Sigmoid colon (tissue), 7 donors: ENCODE measurements at regions of chr2 and their contacts with region 1.

Region 1: DNA sequence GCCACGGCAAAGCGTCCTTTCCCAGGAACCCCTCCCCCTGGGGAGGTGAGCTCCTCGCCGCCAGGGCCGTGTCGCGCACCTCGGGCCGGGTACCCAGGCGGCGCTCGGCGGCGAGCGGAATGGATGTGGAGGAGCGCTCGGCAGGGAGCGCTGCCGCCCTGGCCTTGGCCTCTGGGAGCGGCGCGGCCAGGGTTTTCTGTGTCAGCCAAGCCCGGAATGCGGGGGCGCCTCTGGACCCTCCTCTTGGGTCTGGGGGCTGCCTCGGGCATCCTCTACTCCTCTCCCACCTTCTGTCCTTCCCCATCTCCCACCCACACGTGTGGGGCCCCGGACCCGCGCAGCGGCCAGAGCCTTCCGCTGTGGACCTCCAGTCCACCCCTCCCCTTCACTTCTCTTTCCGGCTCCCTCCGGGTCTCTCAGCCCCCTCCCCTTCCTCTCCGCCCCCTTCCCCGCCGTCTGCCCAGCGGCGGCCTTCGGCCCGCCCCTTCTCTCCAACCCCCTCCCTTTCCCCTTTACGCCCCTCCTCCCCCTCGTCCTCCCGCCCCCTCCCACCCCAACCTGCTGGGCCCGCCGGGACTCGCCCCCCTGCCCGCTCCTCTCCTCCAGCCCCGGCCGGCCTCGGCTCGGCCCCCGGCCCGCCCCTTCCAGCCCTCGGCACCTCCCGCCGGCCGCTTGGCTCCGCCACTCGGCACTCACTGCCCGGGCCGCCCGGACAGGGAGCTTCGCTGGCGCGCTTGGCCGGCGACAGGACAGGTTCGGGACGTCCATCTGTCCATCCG is at the start of gene MERTK:
- DNase-seq: peak; percentile 95
- H3K4me3 ChIP-seq: peak within 1 kb of the TSS; percentile 70 to 80 (median 75)
- H3K27ac ChIP-seq: peak within 1 kb of the TSS; percentile 80 to 90 (median 88)
- H3K4me1 ChIP-seq: peaks cover 0 to 37% (median 23%) of the 10 kb centered on the region in 4 donors
- H3K27me3 ChIP-seq: no peaks in the 10 kb centered on the region
- CTCF ChIP-seq: peak; percentile 43 to 49 (median 46)
- EP300 ChIP-seq: no peak
- POLR2A ChIP-seq: peak in 1 of 2 donors; percentile 42
- total RNA-seq, gene MERTK: 14.4 to 31.6 (median 26.0) TPM

Region 2: DNA sequence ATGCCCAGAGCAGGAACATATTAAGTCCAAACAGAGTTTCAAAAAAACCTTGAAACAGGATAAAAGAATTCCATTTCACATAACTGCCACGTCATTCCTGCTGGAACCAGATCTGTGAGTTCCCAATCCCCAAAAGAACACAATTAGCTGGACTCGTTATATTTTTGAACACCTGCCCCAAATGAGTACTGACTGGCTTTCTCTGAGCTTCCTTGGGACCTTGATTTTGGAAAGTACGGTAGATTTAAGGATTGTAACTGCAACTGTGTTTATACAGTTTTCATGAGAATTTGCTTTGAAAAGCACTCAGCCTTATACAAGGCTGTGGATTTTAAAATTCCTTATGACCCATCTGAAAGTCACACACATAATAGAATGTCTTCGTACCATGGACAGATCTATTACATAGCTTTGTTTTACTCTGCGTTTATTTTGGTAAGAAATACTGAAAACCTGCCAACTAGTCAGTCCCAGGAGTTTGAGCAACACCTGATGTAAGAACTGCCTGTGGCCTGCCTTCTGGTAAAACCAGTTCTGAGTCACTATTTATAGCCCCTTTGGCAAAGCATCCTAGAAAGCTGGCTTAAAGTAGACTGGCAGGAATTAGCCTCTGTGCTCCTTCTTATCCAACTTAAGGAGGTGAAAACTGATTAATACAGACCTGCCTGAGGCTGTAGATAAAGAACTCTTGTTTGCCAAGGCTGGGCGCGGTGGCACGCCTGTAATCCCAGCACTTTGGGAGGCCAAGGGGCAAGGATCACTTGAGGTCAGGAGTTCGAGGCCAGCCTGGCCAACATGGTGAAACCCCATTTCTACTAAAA is 48.4 kb after region 1 on chr2:
- intact Hi-C with region 1: loop called (anchors 5 kb)
- DNase-seq: peak; percentile 76
- H3K4me3 ChIP-seq: no peak overlapping the region
- H3K27ac ChIP-seq: peak overlapping the region; percentile 65 to 83 (median 80)
- H3K4me1 ChIP-seq: peaks cover 0 to 35% (median 28%) of the 10 kb centered on the region in 4 donors
- H3K27me3 ChIP-seq: no peaks in the 10 kb centered on the region
- CTCF ChIP-seq: no peak
- EP300 ChIP-seq: peak in 2 of 4 donors; percentile 37 to 44
- POLR2A ChIP-seq: no peak

Region 3: GRCh38 chr2:112275306-112275886 is 377.3 kb after region 1 on chr2 and contains the start of gene ZC3H6:
- intact Hi-C with region 1: loop called (anchors 5 kb)
- DNase-seq: peak; percentile 99
- H3K4me3 ChIP-seq: peak within 1 kb of the TSS; percentile 68 to 97 (median 89)
- H3K27ac ChIP-seq: peak within 1 kb of the TSS; percentile 95 to 100 (median 99)
- H3K4me1 ChIP-seq: peaks cover 0 to 14% (median 6%) of the 10 kb centered on the region in 4 donors
- H3K27me3 ChIP-seq: no peaks in the 10 kb centered on the region
- CTCF ChIP-seq: peak in 1 of 4 experiments; percentile 36
- EP300 ChIP-seq: peak in 1 of 4 donors; percentile 13
- POLR2A ChIP-seq: peak; percentile 91 to 94
- total RNA-seq, gene ZC3H6: 13.2 to 27.1 (median 16.5) TPM